Endothelial cell of umbilical vein (primary cell): ENCODE measurements at regions of chr2 and their contacts with region 1.

Region 1: DNA sequence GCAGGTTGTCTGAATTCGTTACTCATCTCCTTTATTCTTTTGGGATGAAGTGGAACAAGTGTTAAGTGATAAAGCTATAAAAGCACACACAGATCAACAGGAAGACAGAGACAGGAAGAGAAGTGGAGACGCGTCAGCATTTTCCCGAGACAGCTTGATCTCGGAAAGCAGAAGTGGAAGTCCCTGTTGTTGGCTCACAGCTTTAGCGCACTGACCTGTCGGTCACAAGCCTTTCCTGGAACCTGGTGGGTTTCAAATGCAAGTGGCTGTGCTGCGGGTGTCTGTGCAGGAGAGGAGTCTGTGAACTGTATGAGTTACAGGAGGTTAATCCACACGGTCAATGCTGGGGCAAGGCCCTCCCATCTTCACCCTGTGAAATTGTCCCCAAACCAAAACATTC is 116.6 kb upstream of the PELI1 start:
- DNase-seq: peak; percentile 82
- H3K4me3 ChIP-seq: peak overlapping the region in 1 of 3 experiments; percentile 2
- H3K27ac ChIP-seq: peak overlapping the region; percentile 99
- H3K4me1 ChIP-seq: peaks cover 44% of the 10 kb centered on the region
- H3K27me3 ChIP-seq: no peaks in the 10 kb centered on the region
- CTCF ChIP-seq: no peak
- POLR2A ChIP-seq: peak; percentile 48

Region 2: DNA sequence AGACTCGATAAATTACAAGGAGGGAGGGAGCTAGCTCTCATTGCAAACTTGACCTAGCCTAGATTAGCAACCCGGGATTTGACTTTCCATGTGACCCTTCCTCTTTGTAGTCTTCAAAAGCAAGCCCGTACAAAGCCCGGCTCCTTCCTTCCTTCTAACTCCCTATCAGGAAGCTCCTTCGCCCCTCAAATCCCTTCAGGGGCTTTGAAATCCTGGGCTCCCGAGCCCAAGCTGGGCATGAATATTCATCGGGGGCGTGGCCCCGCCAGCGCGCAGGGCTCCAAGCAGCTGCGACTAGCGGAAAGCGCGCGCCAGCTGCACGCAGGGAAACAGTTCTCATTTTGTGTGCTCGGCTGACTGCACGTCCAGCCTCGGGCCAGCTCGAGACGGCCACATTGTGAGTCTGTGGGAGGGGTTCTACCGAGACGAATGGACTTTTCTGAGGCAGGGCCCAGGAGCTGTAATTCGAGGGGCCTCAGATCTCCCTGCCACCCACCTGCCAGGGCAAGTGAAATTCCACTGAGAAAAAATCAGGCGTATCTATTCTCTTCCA is 32.6 kb before region 1 on chr2:
- CTCF ChIA-PET with region 1: interaction called, 7 read pairs
- POLR2A ChIA-PET with region 1: interaction called, 3 read pairs
- dilution Hi-C with region 1: no loop called
- intact Hi-C with region 1: loop called (anchors 1 kb)
- DNase-seq: peak; percentile 84
- H3K4me3 ChIP-seq: peak overlapping the region; percentile 32 to 72 (median 70)
- H3K27ac ChIP-seq: peak overlapping the region; percentile 10
- H3K4me1 ChIP-seq: peaks cover 9% of the 10 kb centered on the region
- H3K27me3 ChIP-seq: no peaks in the 10 kb centered on the region
- CTCF ChIP-seq: no peak
- POLR2A ChIP-seq: peak; percentile 42

Region 3: GRCh38 chr2:64273524-64274398 is 12.9 kb after region 1 on chr2:
- CTCF ChIA-PET with region 1: interaction called, 12 read pairs
- POLR2A ChIA-PET with region 1: interaction called, 4 read pairs
- dilution Hi-C with region 1: no loop called
- intact Hi-C with region 1: loop called (anchors 2 kb)
- DNase-seq: peak; percentile 75
- H3K4me3 ChIP-seq: no peak overlapping the region
- H3K27ac ChIP-seq: peak overlapping the region; percentile 75
- H3K4me1 ChIP-seq: peaks cover 54% of the 10 kb centered on the region
- H3K27me3 ChIP-seq: no peaks in the 10 kb centered on the region
- CTCF ChIP-seq: no peak
- POLR2A ChIP-seq: no peak